ENCODE measurements at regions of chr6 and their contacts with region 1.

Region 1: GRCh38 chr6:106560996-106561685 is 68.2 kb downstream of the RTN4IP1 start:
- DNase-seq: no peak
- ATAC-seq: no peak
- H3K4me3 ChIP-seq: no peak overlapping the region
- H3K27ac ChIP-seq: no peak overlapping the region
- H3K4me1 ChIP-seq: no peaks in the 10 kb centered on the region
- H3K27me3 ChIP-seq: no peaks in the 10 kb centered on the region
- CTCF ChIP-seq: no peak

Region 2: DNA sequence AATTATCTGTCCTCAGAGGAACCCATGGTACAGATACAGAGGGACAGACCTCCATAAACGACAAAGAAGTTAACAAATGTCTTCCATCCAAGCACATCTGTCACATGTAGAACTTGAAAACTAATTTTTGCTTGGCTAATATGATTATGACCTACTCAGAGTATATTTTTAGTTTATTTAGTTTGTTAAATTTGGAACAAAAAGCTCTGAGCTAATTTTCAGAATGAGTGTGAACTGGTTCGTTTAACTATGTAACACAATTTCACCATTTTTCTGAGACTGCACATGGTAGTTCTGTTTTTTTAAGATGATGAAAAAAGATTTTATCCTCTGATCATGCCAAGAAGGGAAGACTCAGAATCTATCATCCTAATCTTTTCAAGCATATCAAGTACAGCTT is 1123.9 kb before region 1 on chr6:
- intact Hi-C with region 1: loop called in 1 of 2 experiments (anchors 5 kb)
- DNase-seq: no peak
- ATAC-seq: no peak
- H3K4me3 ChIP-seq: no peak overlapping the region
- H3K27ac ChIP-seq: no peak overlapping the region
- H3K4me1 ChIP-seq: no peaks in the 10 kb centered on the region
- H3K27me3 ChIP-seq: no peaks in the 10 kb centered on the region
- CTCF ChIP-seq: no peak

Region 3: DNA sequence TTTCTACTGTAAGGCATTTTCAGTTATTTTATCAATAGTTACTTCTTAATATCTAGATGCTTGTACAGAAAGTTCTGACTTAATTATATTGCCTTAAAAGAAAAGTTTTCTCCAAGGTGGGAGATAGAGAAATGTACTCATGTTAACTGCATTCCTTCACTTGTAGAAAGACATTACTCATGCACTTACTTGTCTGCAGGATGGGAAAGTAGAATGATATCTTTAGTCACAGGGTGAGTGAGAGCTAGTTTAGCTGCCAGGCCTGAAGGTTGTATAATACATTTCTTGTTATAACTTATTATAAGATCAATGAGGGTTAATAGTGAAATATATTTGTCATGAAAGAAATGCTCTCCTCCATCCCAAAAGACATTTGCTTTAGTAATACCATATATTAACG is 108.5 kb before region 1 on chr6:
- intact Hi-C with region 1: loop called in 1 of 2 experiments (anchors 1 kb)
- DNase-seq: no peak
- ATAC-seq: no peak
- H3K4me3 ChIP-seq: no peak overlapping the region
- H3K27ac ChIP-seq: no peak overlapping the region
- H3K4me1 ChIP-seq: no peaks in the 10 kb centered on the region
- H3K27me3 ChIP-seq: no peaks in the 10 kb centered on the region
- CTCF ChIP-seq: no peak

Region 4: DNA sequence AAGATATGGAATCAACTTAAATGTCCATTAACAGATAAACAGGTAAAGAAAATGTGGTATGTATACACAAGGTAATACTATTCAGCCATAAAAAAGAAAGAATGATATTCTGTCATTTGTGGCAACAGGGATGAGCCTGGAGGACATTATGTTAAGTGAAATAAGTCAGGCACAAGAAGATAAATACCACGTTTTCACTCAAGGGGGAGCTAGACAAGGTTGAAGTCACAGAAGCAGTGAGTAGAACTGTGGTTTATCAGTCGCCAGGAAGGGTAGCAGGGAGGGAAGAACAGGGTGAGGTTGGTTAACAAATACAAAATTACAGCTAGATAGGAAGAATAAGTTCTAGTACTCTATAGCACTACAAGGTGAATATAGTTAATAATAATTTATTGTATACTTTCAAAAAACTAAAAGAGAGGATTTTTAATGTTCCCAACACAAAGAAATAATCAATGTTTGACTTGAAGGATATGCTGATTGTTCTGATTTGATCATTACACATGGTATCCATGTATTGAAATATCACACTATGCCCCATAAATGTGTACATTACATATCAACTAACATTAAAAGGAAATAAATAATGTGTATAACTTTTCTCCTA is 47.0 kb after region 1 on chr6:
- intact Hi-C with region 1: no loop called
- DNase-seq: no peak
- ATAC-seq: peak in 2 of 4 donors; percentile 73 to 76
- H3K4me3 ChIP-seq: no peak overlapping the region
- H3K27ac ChIP-seq: no peak overlapping the region
- H3K4me1 ChIP-seq: peaks cover 10% of the 10 kb centered on the region
- H3K27me3 ChIP-seq: no peaks in the 10 kb centered on the region
- CTCF ChIP-seq: peak; percentile 54

Region 5: GRCh38 chr6:106799008-106799894 is 238.1 kb after region 1 on chr6:
- intact Hi-C with region 1: no loop called
- DNase-seq: no peak
- ATAC-seq: peak; percentile 54 to 94 (median 86)
- H3K4me3 ChIP-seq: no peak overlapping the region
- H3K27ac ChIP-seq: peak overlapping the region; percentile 70
- H3K4me1 ChIP-seq: peaks cover 29% of the 10 kb centered on the region
- H3K27me3 ChIP-seq: no peaks in the 10 kb centered on the region
- CTCF ChIP-seq: no peak

Measured in psoas muscle (tissue), 8 donors.